ENCODE measurements at regions of chr7 and their contacts with region 1.

Region 1: GRCh38 chr7:73578342-73579127 is at the start of gene TBL2:
- DNase-seq: peak; percentile 97
- H3K4me3 ChIP-seq: peak within 1 kb of the TSS; percentile 91 to 99 (median 97)
- H3K27ac ChIP-seq: peak within 1 kb of the TSS; percentile 73
- H3K4me1 ChIP-seq: peaks cover 13% of the 10 kb centered on the region
- H3K27me3 ChIP-seq: no peaks in the 10 kb centered on the region
- CTCF ChIP-seq: peak in 1 of 2 donors; percentile 41
- total RNA-seq, gene TBL2: 30.0 to 34.5 TPM

Region 2: GRCh38 chr7:73557108-73557396 is 21.5 kb before region 1 on chr7:
- CTCF ChIA-PET with region 1: no interaction called
- dilution Hi-C with region 1: no loop called
- in situ Hi-C with region 1: no loop called
- intact Hi-C with region 1: loop called (anchors 1 kb)
- DNase-seq: peak; percentile 93
- H3K4me3 ChIP-seq: peak overlapping the region; percentile 73 to 99 (median 77)
- H3K27ac ChIP-seq: peak overlapping the region; percentile 93
- H3K4me1 ChIP-seq: peaks cover 28% of the 10 kb centered on the region
- H3K27me3 ChIP-seq: no peaks in the 10 kb centered on the region
- CTCF ChIP-seq: no peak